Caco-2 (cell line): ENCODE measurements at regions of chr19 and their contacts with region 1.

Region 1: DNA sequence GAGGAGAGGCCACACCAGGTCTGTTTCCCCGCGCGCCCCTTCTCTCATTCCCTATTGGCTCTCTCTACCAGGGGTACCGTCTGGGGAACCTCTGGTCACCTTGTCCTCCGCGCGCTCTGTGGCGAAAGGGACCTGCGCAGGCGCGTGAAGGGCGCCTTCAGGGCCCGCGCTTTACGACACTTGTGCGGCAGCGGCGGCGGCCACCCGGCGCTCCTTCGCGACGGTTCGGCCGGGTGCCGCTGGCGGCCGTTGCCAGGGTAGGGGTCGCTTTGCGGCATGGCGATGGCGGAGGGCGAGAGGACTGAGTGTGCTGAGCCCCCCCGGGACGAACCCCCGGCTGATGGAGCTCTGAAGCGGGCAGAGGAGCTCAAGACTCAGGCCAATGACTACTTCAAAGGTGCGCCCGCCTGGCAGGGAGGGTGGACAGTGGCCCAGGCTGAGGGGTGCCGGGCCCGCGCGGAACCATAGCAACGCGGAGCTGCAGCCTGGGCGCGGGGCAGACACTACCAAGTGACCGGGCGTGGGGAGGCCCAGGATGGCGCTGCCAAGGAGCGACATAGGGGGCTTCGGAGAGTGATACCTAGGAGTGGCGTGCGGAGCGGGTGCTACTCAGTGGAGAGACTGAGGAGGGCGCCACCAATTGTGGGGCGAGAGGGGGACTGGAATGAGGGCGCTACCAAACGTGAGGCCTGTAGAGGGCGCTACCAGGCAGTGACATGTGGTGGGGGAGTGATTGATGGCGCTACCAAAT is at the start of gene PPP5C:
- DNase-seq: peak; percentile 96 to 97
- H3K4me3 ChIP-seq: peak within 1 kb of the TSS; percentile 70
- H3K4me3 Mint-ChIP-seq: peak within 1 kb of the TSS; percentile 92
- H3K27ac Mint-ChIP-seq: peak within 1 kb of the TSS; percentile 78
- H3K4me1 ChIP-seq: peaks cover 4% of the 10 kb centered on the region; the same call in 1 of the 2 replicates
- H3K4me1 Mint-ChIP-seq: peaks cover 28% of the 10 kb centered on the region
- H3K27me3 ChIP-seq: no peaks in the 10 kb centered on the region
- H3K27me3 Mint-ChIP-seq: peaks cover 3% of the 10 kb centered on the region
- CTCF ChIP-seq: peak; percentile 79 to 95
- total RNA-seq, gene PPP5C: 120 and 130 TPM in 2 replicates

Region 2: DNA sequence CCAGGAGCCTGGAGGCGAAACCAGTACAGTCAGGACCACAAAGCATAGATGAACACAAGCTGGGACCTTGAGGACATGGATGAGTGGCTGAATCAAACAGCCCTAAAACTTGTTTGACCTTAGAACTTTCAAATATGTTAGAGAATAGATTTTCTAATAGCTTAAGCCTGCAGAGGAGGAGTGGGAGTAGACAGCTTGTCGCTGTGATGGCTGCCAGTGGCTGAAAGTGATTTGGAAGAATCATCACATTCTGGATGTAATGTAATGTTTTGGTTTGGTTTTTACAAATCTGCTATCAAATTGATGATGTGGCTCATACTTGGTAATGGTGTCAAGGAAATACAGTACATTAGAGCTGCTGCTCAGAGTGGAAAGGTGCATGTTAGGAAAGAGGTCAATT is 234.5 kb before region 1 on chr19:
- CTCF ChIA-PET with region 1: interaction called, 10 read pairs
- POLR2A ChIA-PET with region 1: no interaction called
- intact Hi-C with region 1: no loop called
- DNase-seq: no peak
- H3K4me3 ChIP-seq: no peak overlapping the region
- H3K4me3 Mint-ChIP-seq: no peak overlapping the region
- H3K27ac Mint-ChIP-seq: no peak overlapping the region
- H3K4me1 ChIP-seq: 0 out of 2 replicates have a peak, but pooled peaks cover 4% of the 10 kb centered on the region
- H3K4me1 Mint-ChIP-seq: no peaks in the 10 kb centered on the region
- H3K27me3 ChIP-seq: no peaks in the 10 kb centered on the region
- H3K27me3 Mint-ChIP-seq: no peaks in the 10 kb centered on the region
- CTCF ChIP-seq: no peak

Region 3: GRCh38 chr19:46201413-46202310 is 145.3 kb before region 1 on chr19:
- CTCF ChIA-PET with region 1: no interaction called
- POLR2A ChIA-PET with region 1: no interaction called
- intact Hi-C with region 1: no loop called
- DNase-seq: no peak
- H3K4me3 ChIP-seq: no peak overlapping the region
- H3K4me3 Mint-ChIP-seq: peak overlapping the region; percentile 0
- H3K27ac Mint-ChIP-seq: peak overlapping the region; percentile 16
- H3K4me1 ChIP-seq: peaks cover 22% of the 10 kb centered on the region
- H3K4me1 Mint-ChIP-seq: peaks cover 32% of the 10 kb centered on the region
- H3K27me3 ChIP-seq: no peaks in the 10 kb centered on the region
- H3K27me3 Mint-ChIP-seq: no peaks in the 10 kb centered on the region
- CTCF ChIP-seq: no peak

Region 4: DNA sequence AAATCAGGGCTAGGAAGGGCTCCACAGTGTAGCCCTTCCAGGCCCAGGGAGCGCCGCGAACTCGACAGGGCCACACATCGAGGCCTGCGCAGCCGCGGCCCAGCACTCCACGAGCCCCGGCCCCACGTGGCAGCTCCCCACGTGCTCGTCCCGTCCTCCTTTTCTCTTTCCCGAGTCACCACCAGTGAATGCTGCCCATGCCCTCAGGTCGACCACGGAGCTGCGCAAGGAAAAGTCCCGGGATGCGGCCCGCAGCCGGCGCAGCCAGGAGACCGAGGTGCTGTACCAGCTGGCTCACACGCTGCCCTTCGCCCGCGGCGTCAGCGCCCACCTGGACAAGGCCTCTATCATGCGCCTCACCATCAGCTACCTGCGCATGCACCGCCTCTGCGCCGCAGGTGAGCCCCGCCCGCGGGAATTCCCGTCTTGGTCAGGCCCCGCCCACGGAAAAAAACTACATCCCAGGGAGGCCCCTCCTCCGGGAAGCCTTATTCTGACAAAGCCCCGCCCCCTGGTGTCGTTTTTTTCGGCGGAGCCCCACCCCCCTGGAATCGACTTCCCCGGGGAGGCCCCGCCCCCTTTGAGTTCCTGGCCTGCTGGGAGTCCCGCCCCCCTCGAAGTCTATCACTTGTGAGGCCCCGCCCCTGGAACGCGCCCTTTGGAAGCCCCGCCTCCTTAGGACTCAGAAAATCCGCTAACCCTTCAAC is 43.2 kb before region 1 on chr19:
- CTCF ChIA-PET with region 1: interaction called, 4 read pairs
- POLR2A ChIA-PET with region 1: no interaction called
- intact Hi-C with region 1: loop called (anchors 2 kb)
- DNase-seq: peak; percentile 98
- H3K4me3 ChIP-seq: peak overlapping the region; percentile 52
- H3K4me3 Mint-ChIP-seq: peak overlapping the region; percentile 77
- H3K27ac Mint-ChIP-seq: peak overlapping the region; percentile 91
- H3K4me1 ChIP-seq: peaks cover 26% of the 10 kb centered on the region
- H3K4me1 Mint-ChIP-seq: no peaks in the 10 kb centered on the region
- H3K27me3 ChIP-seq: no peaks in the 10 kb centered on the region; the same call in 1 of the 2 replicates
- H3K27me3 Mint-ChIP-seq: no peaks in the 10 kb centered on the region
- CTCF ChIP-seq: no peak